ENCODE measurements at regions of chr1 and their contacts with region 1.

Region 1: DNA sequence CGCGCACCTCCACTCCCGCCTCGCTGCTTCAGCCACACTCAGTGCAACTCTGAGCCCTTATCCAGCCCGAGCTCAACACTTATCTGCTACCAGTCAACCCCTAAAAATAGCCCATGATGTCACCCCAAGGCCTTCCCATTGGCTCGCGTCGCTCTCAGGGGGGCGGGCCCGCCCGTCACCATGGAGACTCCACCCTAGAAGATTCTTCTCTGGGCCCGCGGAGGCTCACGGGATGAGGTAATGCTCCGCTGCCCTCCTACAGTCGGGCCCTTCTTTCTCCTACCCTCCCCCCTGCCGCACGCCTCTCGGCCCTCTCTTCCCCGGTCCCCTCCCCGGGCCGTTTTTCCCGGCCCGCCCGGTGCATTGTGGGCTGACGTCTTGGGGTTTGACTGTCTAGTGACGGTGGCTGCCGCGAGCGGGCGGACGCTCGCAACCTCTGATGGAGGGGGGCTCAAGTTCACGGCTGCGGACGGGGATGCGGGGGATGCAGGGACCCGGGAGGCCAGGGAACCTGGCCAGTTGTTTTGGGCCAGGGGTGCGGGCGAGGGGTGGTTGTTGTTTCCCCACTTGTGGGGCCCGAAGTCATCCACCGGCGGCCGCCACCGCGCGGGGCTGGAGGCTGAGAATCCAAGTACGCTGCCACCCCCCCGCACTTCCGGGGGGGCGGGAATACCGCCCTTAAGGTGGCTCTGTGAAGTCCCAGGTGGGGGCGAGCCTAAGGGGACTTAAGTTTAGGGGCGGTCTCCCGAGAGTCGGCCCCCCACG is at the start of gene JUN:
- DNase-seq: peak; percentile 97 to 100 (median 99)
- ATAC-seq: peak; percentile 72
- H3K4me3 ChIP-seq: peak within 1 kb of the TSS; percentile 91 to 99
- H3K4me3 Mint-ChIP-seq: peak within 1 kb of the TSS; percentile 92
- H3K27ac ChIP-seq: peak within 1 kb of the TSS; percentile 100
- H3K27ac Mint-ChIP-seq: peak within 1 kb of the TSS; percentile 97
- H3K4me1 ChIP-seq: peaks cover 4% of the 10 kb centered on the region
- H3K4me1 Mint-ChIP-seq: peaks cover 32% of the 10 kb centered on the region
- H3K27me3 ChIP-seq: no peaks in the 10 kb centered on the region
- H3K27me3 Mint-ChIP-seq: no peaks in the 10 kb centered on the region
- CTCF ChIP-seq: no peak
- total RNA-seq, gene JUN: 595 to 598 TPM

Region 2: DNA sequence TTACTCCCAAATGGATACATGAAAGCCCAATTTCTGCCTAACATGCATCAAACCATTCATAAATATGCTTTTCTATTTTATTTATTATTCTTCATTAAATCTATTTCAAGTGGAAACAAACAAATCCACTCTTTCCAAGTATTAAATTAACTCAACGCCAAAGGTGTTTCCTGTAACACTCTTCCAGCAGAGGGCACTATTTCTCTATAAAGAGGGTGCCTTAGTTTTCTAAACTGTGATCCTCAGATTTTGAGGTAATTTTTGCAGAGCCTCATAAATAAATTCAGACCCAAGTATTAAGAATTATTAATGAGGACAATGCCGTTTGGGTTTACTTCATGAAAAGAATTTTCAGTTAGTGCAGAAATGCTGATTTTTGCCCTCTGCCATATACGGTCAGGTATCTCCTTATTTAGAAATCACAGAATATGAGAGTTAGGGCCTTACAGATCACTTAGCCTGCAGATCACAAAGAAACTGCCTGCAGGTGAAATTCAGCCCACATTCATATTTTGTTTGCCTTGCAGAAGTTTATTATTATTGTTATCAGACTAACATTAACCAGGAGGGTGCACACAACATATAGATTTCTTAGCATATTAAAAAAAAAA is 44.2 kb before region 1 on chr1:
- CTCF ChIA-PET with region 1: interaction called, 4 read pairs
- POLR2A ChIA-PET with region 1: no interaction called
- intact Hi-C with region 1: loop called in 1 of 2 experiments (anchors 5 kb)
- DNase-seq: peak in 3 of 9 experiments; percentile 35 to 76 (median 67)
- ATAC-seq: peak; percentile 49
- H3K4me3 ChIP-seq: no peak overlapping the region
- H3K4me3 Mint-ChIP-seq: no peak overlapping the region
- H3K27ac ChIP-seq: no peak overlapping the region
- H3K27ac Mint-ChIP-seq: no peak overlapping the region
- H3K4me1 ChIP-seq: no peaks in the 10 kb centered on the region
- H3K4me1 Mint-ChIP-seq: peaks cover 5% of the 10 kb centered on the region
- H3K27me3 ChIP-seq: no peaks in the 10 kb centered on the region
- H3K27me3 Mint-ChIP-seq: peaks cover 2% of the 10 kb centered on the region
- CTCF ChIP-seq: peak; percentile 98

Region 3: DNA sequence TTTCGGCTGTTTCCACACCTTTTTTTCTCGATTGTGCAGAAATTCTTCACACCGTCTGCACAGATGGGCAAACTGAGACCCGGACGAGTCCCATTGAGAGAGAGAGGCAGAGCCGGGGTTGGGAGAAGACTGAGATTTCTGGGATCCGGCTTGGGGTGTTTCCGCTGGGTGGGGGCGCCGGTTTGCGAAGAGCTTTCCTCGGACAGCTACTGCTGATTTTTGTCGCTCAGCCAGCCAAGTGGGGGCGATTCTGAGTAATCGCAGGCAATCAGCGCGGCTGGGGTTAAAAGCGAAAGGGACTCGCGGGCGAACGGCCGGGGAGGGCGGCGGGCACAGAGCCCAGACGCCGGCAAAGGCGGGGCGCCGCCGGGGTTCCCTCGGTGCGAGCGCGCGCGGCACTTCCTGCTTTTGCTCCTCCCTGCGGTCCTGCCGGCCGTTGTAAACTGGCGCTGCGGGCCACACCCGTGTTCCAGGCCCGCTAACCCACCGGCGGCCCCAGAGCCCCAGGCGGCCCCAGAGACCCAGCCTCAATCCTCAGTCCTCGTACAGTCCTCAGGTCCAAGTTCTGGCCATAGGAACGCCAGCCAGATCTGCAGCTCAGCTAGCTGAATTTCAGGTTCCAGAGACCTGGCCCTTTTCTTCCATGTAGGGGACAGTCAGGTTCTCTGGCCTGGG is 32.0 kb after region 1 on chr1:
- CTCF ChIA-PET with region 1: interaction called, 4 read pairs
- POLR2A ChIA-PET with region 1: interaction called, 10 read pairs
- intact Hi-C with region 1: loop called (anchors 1 kb)
- DNase-seq: peak; percentile 61 to 90 (median 81)
- ATAC-seq: peak; percentile 71
- H3K4me3 ChIP-seq: peak overlapping the region; percentile 84 to 92
- H3K4me3 Mint-ChIP-seq: peak overlapping the region; percentile 91
- H3K27ac ChIP-seq: peak overlapping the region; percentile 67 to 87
- H3K27ac Mint-ChIP-seq: peak overlapping the region; percentile 91
- H3K4me1 ChIP-seq: peaks cover 36% of the 10 kb centered on the region
- H3K4me1 Mint-ChIP-seq: peaks cover 46% of the 10 kb centered on the region
- H3K27me3 ChIP-seq: no peaks in the 10 kb centered on the region
- H3K27me3 Mint-ChIP-seq: no peaks in the 10 kb centered on the region
- CTCF ChIP-seq: no peak

Region 4: DNA sequence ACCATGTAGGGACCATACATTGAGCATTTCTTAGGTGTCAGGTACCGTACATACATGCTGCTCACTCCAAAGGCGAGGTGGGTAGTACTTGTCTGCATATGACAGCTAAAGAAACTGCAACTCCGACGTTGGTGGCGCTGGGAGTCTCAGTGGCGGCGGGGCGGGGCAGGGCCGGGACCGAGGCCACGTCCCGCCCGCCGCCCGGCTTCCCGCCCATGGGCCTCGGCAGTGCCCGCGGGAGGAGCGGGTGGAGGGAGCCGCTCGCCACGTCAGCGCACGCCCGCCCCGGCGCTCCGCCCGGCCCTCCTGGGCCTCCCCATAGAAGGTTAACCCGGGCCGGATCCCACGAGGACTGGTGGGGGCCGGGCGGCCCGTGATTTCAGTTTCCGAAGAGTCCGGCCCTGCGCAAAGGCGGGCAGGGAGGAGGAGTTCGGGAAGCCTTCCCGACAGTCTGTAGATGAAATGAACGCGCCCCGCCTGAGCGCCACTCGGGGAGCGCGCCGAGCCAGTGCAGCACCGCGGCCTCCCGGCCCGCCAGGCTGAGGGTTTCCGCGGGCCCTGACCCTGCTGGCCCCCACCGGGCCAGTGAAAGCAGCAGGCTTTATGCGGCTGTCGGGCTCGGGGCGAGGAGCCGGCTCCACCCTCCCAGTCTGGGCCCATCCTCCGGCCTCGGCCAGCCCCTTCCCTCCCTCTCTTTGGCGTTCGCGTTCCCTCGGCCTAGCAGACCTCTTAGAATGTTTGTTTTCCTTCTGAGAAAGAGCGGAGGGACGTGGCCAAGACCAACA is 119.5 kb after region 1 on chr1:
- CTCF ChIA-PET with region 1: interaction called, 4 read pairs
- POLR2A ChIA-PET with region 1: interaction called, 6 read pairs
- intact Hi-C with region 1: loop called (anchors 1 to 5 kb)
- DNase-seq: peak; percentile 33 to 83 (median 69)
- ATAC-seq: peak; percentile 86
- H3K4me3 ChIP-seq: peak overlapping the region; percentile 47 to 53
- H3K4me3 Mint-ChIP-seq: peak overlapping the region; percentile 82
- H3K27ac ChIP-seq: peak overlapping the region; percentile 34 to 76
- H3K27ac Mint-ChIP-seq: peak overlapping the region; percentile 84
- H3K4me1 ChIP-seq: peaks cover 11% of the 10 kb centered on the region
- H3K4me1 Mint-ChIP-seq: peaks cover 18% of the 10 kb centered on the region
- H3K27me3 ChIP-seq: no peaks in the 10 kb centered on the region
- H3K27me3 Mint-ChIP-seq: no peaks in the 10 kb centered on the region
- CTCF ChIP-seq: no peak

Region 5: GRCh38 chr1:58986996-58987767 is 203.0 kb after region 1 on chr1:
- CTCF ChIA-PET with region 1: no interaction called
- POLR2A ChIA-PET with region 1: no interaction called
- intact Hi-C with region 1: no loop called
- DNase-seq: peak in 4 of 9 experiments; percentile 24 to 50 (median 34)
- ATAC-seq: peak; percentile 69
- H3K4me3 ChIP-seq: no peak overlapping the region
- H3K4me3 Mint-ChIP-seq: no peak overlapping the region
- H3K27ac ChIP-seq: no peak overlapping the region
- H3K27ac Mint-ChIP-seq: peak overlapping the region; percentile 52
- H3K4me1 ChIP-seq: peaks cover 10% of the 10 kb centered on the region
- H3K4me1 Mint-ChIP-seq: peaks cover 22% of the 10 kb centered on the region
- H3K27me3 ChIP-seq: no peaks in the 10 kb centered on the region
- H3K27me3 Mint-ChIP-seq: no peaks in the 10 kb centered on the region
- CTCF ChIP-seq: no peak

Region 6: GRCh38 chr1:59046730-59047157 is 262.6 kb after region 1 on chr1:
- CTCF ChIA-PET with region 1: interaction called, 3 read pairs
- POLR2A ChIA-PET with region 1: no interaction called
- intact Hi-C with region 1: loop called in 1 of 2 experiments (anchors 10 kb)
- DNase-seq: peak in 8 of 9 experiments; percentile 7 to 81 (median 40)
- ATAC-seq: peak; percentile 84
- H3K4me3 ChIP-seq: no peak overlapping the region
- H3K4me3 Mint-ChIP-seq: peak overlapping the region; percentile 38
- H3K27ac ChIP-seq: peak overlapping the region in 1 of 2 experiments; percentile 57
- H3K27ac Mint-ChIP-seq: peak overlapping the region; percentile 73
- H3K4me1 ChIP-seq: peaks cover 38% of the 10 kb centered on the region
- H3K4me1 Mint-ChIP-seq: peaks cover 48% of the 10 kb centered on the region
- H3K27me3 ChIP-seq: no peaks in the 10 kb centered on the region
- H3K27me3 Mint-ChIP-seq: no peaks in the 10 kb centered on the region
- CTCF ChIP-seq: peak; percentile 24

Region 7: DNA sequence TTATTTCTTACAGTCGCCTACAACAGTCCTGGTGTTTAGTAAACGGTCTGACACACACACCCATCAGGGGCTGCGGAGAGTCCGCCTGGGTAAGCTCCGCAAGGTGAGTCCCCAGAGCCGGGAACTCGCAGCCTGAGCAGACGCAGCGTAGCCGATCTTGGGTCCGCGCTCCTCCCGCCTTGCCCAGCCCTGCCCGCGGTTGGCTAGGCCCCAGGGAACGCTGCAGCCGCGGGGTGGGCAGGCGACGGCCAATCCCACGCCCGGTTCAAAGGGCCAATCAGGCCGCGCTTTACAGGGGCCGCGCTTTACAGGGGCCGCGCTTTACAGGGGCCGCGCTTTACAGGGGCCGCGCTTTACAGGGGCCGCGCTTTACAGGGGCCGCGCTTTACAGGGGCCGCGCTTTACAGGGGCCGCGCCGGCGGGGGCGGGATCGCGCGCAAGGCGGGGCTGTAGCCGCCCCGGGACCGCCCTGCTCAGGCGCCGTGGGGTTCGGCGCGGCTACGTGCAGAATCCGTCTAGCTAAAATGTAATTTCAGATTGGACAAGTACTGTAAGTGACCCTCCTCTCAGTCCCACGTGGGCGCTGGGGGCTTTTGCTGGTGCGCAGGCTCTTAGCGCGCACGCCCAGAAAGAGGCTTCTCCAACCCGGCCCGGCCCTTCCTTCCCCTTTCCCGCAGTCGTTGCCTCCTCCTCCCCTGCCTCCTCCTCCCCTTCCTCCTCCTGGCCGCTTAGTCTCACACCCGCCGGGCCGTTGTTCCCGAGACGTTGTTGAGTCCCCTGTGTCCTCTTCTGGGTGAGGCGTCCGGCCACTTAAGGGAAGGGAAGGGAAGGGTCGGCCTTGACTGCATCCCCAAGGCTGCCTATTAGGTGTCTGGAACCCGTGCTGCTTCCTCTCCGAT is 512.4 kb after region 1 on chr1 and contains the start of gene FGGY:
- CTCF ChIA-PET with region 1: interaction called, 4 read pairs
- POLR2A ChIA-PET with region 1: interaction called, 12 read pairs
- intact Hi-C with region 1: loop called (anchors 1 to 2 kb)
- DNase-seq: peak; percentile 69 to 96 (median 84)
- ATAC-seq: peak; percentile 92
- H3K4me3 ChIP-seq: peak within 1 kb of the TSS; percentile 75 to 77
- H3K4me3 Mint-ChIP-seq: peak within 1 kb of the TSS; percentile 90
- H3K27ac ChIP-seq: peak within 1 kb of the TSS; percentile 81 to 92
- H3K27ac Mint-ChIP-seq: peak within 1 kb of the TSS; percentile 96
- H3K4me1 ChIP-seq: no peaks in the 10 kb centered on the region
- H3K4me1 Mint-ChIP-seq: peaks cover 25% of the 10 kb centered on the region
- H3K27me3 ChIP-seq: no peaks in the 10 kb centered on the region
- H3K27me3 Mint-ChIP-seq: no peaks in the 10 kb centered on the region
- CTCF ChIP-seq: no peak
- total RNA-seq, gene FGGY: 12.8 to 14.3 TPM

Measured in CD8-positive, alpha-beta T cell (primary cell).